Ascending aorta (tissue), 2 donors: ENCODE measurements at regions of chrX and their contacts with region 1.

Region 1: DNA sequence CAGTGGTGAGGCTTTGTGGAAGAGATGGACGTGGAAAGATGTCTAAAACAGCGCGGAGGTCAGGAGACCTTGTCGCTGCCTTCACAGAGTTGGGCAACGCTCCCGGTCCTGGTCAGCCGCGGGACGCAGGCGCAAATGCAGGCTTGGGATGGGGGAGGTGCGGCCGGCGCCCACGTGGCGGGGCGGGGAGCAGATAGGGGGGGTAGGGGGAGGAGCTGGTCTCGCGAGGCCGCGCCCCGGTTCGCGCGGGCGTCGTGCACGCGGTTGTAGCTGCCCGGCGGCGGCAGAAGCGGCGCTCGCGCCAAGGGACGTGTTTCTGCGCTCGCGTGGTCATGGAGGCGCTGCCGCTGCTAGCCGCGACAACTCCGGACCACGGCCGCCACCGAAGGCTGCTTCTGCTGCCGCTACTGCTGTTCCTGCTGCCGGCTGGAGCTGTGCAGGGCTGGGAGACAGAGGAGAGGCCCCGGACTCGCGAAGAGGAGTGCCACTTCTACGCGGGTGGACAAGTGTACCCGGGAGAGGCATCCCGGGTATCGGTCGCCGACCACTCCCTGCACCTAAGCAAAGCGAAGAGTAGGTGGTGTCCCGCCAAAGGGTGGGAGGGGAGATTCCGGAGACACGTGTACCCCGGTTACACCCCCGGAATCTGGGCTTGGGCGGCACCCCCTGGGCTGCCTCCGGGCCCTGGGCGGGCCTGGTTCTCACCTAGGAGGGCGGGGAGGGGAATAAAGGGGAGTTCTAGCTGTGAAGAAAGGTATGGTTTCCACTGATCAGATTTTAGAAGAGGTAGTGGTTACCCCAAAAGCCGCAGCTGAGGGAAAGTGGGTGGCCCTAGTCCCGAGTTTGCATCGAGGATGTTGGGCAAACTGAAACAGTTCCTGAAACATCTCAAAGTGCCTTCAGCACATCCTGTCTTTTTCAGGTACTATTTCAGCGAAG is at the start of gene PRDX4:
- DNase-seq: peak; percentile 52 to 90
- H3K4me3 ChIP-seq: peak within 1 kb of the TSS; percentile 61 to 69
- H3K27ac ChIP-seq: peak within 1 kb of the TSS; percentile 74 to 76
- H3K4me1 ChIP-seq: no peaks in the 10 kb centered on the region
- H3K27me3 ChIP-seq: no peaks in the 10 kb centered on the region
- CTCF ChIP-seq: no peak
- total RNA-seq, gene PRDX4: 112 TPM

Region 2: GRCh38 chrX:23742697-23743622 is 75.5 kb after region 1 on chrX and contains the start of gene ACOT9:
- intact Hi-C with region 1: loop called (anchors 5 kb)
- DNase-seq: peak; percentile 87 to 97
- H3K4me3 ChIP-seq: peak within 1 kb of the TSS; percentile 71 to 79
- H3K27ac ChIP-seq: peak within 1 kb of the TSS; percentile 93 to 98
- H3K4me1 ChIP-seq: no peaks in the 10 kb centered on the region
- H3K27me3 ChIP-seq: no peaks in the 10 kb centered on the region
- CTCF ChIP-seq: no peak
- total RNA-seq, gene ACOT9: 6.6 TPM